Left cardiac atrium (tissue), 4 donors: ENCODE measurements at regions of chr3 and their contacts with region 1.

Region 1: GRCh38 chr3:105997800-105998526 is 129.2 kb upstream of the CBLB start:
- DNase-seq: peak; percentile 29
- ATAC-seq: peak; percentile 77 to 96

Region 2: GRCh38 chr3:105976196-105976595 is 21.8 kb before region 1 on chr3:
- intact Hi-C with region 1: loop called in 1 of 2 experiments (anchors 2 kb)
- DNase-seq: no peak
- ATAC-seq: peak in 1 of 2 donors; percentile 33